Astrocyte of the cerebellum (primary cell): ENCODE measurements at regions of chr17 and their contacts with region 1.

Region 1: DNA sequence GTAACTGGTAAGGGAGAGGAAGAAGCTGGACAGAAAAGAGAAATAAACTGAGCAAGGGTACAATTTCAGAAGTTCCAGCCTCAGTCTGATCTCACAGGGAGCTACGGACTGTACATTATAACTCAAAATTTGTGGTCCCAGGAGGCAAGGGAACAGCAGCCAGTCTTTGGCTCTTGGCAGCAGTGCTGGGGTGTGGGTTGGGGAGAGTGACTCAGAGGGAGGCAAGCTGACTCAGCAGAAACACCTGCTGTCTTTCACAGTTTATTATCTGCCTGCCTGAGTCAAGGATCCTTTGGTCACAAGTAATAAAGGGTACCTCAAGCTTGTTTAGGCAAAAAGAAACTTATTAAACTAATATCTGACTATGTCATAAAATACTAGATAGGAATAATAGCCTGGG is 73.5 kb upstream of the KIF2B start:
- DNase-seq: peak; percentile 50
- H3K4me3 ChIP-seq: no peak overlapping the region
- CTCF ChIP-seq: no peak

Region 2: GRCh38 chr17:53807286-53807685 is 58.1 kb after region 1 on chr17:
- in situ Hi-C with region 1: loop called (anchors 5 kb)
- DNase-seq: no peak
- H3K4me3 ChIP-seq: no peak overlapping the region
- CTCF ChIP-seq: no peak